ENCODE measurements at regions of chr11 and their contacts with region 1.

Region 1: DNA sequence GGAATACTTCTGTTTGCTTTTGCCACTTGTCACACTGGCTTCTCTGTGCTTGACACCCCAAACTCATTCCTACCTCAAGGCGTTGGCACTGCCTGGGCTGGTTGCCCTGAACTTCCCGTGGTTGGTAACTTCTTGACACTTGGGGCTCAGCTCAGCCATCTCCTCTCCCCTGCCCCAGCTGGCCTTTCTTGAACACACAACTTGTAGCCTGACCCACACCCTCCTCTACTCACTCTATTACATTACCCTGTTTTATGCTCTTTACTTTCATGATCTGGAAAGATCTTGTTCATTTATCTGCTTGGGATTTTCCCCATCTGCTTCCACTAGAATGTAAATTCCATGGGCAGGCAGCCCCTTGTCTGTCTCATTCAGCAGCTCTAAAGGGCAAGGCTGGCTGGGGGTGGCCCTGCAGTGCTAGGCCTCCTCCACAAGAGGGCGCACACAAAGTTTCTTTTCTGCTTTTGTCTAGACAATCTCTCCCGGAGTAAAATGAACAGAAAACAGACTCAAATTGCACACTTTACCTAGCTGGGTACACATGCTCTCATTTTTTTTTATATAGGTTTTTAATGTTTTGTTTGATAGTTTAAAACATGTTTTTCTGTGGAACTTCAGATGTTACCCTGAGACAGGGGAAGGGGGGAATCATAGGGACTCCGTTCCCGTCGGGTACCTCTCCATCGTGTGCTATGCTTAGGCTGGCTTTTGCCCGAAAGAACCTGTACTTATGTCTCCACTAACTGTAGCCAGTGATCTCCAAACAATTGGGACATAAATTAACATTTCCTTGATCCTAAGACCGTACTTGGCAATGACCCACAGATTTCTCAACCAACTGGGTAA is 16.4 kb upstream of the MRGPRX2 start:
- DNase-seq: peak; percentile 62
- ATAC-seq: peak; percentile 79
- H3K4me3 ChIP-seq: no peak overlapping the region
- H3K4me3 Mint-ChIP-seq: no peak overlapping the region
- H3K27ac ChIP-seq: no peak overlapping the region
- H3K27ac Mint-ChIP-seq: no peak overlapping the region
- H3K4me1 ChIP-seq: peaks cover 0 to 4% of the 10 kb centered on the region in 2 donors
- H3K4me1 Mint-ChIP-seq: no peaks in the 10 kb centered on the region
- H3K27me3 ChIP-seq: peaks cover 0 to 6% (median 2%) of the 10 kb centered on the region in 4 experiments
- H3K27me3 Mint-ChIP-seq: peaks cover 24% of the 10 kb centered on the region
- CTCF ChIP-seq: peak; percentile 100

Region 2: GRCh38 chr11:19087658-19088057 is 10.7 kb after region 1 on chr11:
- CTCF ChIA-PET with region 1: interaction called, 21 read pairs
- POLR2A ChIA-PET with region 1: no interaction called
- intact Hi-C with region 1: no loop called
- DNase-seq: no peak
- ATAC-seq: no peak
- H3K4me3 ChIP-seq: no peak overlapping the region
- H3K4me3 Mint-ChIP-seq: no peak overlapping the region
- H3K27ac ChIP-seq: no peak overlapping the region
- H3K27ac Mint-ChIP-seq: no peak overlapping the region
- H3K4me1 ChIP-seq: no peaks in the 10 kb centered on the region
- H3K4me1 Mint-ChIP-seq: no peaks in the 10 kb centered on the region
- H3K27me3 ChIP-seq: peaks cover 0 to 7% (median 2%) of the 10 kb centered on the region in 4 experiments
- H3K27me3 Mint-ChIP-seq: peaks cover 17% of the 10 kb centered on the region
- CTCF ChIP-seq: no peak

Measured in B cell (primary cell).